Spleen (tissue), 13 donors: ENCODE measurements at regions of chr14 and their contacts with region 1.

Region 1: DNA sequence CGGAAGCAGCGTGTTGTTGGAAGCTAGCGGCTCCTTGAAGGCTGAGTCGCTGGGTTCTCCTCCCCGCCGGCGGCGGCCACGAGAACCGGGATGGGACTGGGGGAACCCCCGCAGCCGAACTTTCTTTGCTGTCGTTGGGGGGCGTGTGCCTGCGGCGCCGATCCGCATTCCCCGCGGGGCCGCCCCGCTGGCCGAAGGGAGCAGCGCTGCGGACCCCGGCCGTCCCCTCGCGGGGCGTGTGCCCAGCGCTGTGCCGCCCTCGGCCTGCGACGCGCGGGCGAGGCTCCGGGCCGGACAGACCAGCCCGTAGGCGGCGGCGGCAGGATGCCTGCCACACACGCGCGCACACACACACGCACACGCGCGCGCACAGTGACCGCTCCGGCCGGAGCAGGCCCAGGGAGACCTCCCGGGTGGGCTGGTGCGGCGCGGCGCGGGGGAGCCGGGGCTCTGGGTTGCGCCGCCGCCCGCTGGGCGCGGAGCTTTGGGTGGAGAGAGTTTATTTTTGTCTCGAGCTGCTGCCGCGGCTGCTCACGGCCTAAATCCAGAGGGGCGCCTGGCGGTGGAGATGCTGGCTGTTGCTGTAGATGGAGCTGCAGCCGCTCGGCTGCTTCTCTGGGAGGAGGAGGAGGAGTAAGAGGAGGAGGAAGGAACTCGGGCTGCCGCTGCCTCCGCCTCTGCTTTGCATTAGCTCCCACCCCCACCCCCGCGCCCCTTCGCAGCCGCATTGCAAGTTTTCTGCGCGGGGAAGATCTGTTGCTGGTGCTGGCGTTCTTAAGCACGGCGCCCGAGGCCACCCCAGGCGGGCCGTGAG is at the start of gene SAMD4A:
- DNase-seq: peak; percentile 94
- H3K4me3 ChIP-seq: peak within 1 kb of the TSS; percentile 56 to 77 (median 67)
- H3K27ac ChIP-seq: peak within 1 kb of the TSS; percentile 83 to 95 (median 94)
- H3K4me1 ChIP-seq: peaks cover 14 to 67% (median 49%) of the 10 kb centered on the region in 6 donors
- H3K27me3 ChIP-seq: peaks cover 0 to 50% (median 0%) of the 10 kb centered on the region in 7 donors
- CTCF ChIP-seq: peak in 7 of 11 experiments; percentile 15 to 50 (median 31)
- POLR2A ChIP-seq: no peak
- total RNA-seq, gene SAMD4A: 15.5 to 31.0 (median 24.5) TPM

Region 2: DNA sequence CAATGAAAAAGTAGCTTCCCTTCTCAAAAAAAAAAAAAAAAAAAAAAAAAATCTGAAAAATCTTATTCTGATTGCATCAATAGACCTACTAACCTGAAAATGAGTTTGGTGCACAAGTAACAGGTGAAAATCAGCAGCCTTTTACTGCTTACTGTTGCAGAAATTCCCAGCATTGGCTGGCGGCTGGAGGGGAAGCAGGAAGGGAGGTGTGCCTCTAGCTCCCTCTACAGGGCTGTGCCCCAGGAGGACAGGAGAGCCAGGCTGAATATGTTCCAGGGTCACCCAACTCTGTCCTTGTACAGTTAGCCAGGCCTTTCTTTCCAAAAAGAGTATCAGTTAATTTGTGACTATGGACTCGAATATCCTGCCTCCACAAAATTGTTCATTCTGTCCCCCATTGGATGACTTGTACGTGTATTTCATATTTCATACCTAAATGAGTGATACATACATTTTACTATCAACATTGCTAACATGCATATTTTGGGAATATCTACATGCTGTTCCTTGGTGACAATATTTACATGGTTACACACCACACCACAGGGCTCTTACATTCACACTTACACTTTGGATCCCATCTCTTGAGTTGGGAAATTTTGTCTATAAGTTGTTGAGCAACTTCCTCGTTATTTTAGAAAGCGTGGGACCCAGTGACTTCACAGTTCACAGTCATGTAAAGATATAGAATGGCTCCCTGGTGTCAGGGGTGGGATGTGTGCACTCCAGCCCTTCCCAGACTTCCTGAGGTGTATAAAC is 125.1 kb after region 1 on chr14:
- intact Hi-C with region 1: loop called (anchors 5 kb)
- DNase-seq: peak; percentile 86
- H3K4me3 ChIP-seq: no peak overlapping the region
- H3K27ac ChIP-seq: peak overlapping the region in 3 of 8 donors; percentile 9 to 60 (median 17)
- H3K4me1 ChIP-seq: peaks cover 0 to 20% (median 15%) of the 10 kb centered on the region in 6 donors
- H3K27me3 ChIP-seq: no peaks in the 10 kb centered on the region
- CTCF ChIP-seq: peak; percentile 45 to 86 (median 80)
- POLR2A ChIP-seq: no peak

Region 3: DNA sequence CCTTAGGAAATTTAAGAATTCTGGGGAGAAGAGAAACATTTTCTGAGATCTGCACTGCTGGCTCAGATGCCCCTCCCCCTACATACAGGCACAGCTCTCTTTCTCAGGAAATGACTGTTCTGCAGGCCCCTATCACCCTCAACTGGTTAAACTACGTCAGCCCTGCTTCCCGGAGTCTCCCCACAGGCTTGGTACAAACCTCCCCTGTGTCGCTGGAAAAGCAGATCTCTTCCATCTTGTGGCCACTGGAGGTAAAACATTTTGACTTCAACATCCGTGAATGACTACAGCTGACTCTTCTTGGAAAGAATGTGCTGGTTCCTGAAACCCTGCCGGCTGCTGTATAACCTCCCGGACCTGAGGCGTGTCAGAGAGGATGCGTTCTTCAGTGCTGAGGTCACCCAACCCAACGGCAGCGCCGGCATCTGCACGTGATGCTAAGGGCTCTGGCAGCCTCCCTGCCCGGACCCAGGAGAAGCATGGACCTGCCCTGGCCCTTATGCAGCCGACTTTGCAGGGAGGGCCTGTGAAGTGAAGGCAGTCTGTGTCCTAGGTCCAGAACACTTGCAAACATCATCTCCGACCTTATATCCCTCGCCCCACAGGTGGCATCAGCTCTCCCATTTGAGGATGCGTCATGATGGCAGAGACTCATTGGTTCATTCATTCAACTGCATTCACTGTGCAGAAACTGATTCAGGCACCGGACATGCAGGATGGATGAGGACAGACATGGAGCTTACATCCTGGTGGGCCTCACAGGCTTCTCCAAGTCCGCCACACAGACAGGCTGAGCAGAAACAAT is 206.8 kb after region 1 on chr14:
- intact Hi-C with region 1: loop called (anchors 2 kb)
- DNase-seq: peak; percentile 84
- H3K4me3 ChIP-seq: peak overlapping the region in 1 of 8 donors; percentile 23
- H3K27ac ChIP-seq: peak overlapping the region; percentile 51 to 80 (median 74)
- H3K4me1 ChIP-seq: peaks cover 25 to 59% (median 40%) of the 10 kb centered on the region in 6 donors
- H3K27me3 ChIP-seq: no peaks in the 10 kb centered on the region
- CTCF ChIP-seq: peak in 9 of 11 experiments; percentile 35 to 79 (median 50)
- POLR2A ChIP-seq: no peak